WTC11 (cell line): ENCODE measurements at regions of chr17 and their contacts with region 1.

Region 1: GRCh38 chr17:31842183-31843069 is 16.6 kb downstream of the COPRS start:
- DNase-seq: peak; percentile 81
- ATAC-seq: peak; percentile 97
- H3K4me3 Mint-ChIP-seq: no peak overlapping the region
- H3K27ac Mint-ChIP-seq: no peak overlapping the region
- H3K4me1 Mint-ChIP-seq: no peaks in the 10 kb centered on the region
- H3K27me3 Mint-ChIP-seq: peaks cover 5% of the 10 kb centered on the region; the same call in 1 of the 2 replicates
- CTCF ChIP-seq: peak; percentile 79

Region 2: DNA sequence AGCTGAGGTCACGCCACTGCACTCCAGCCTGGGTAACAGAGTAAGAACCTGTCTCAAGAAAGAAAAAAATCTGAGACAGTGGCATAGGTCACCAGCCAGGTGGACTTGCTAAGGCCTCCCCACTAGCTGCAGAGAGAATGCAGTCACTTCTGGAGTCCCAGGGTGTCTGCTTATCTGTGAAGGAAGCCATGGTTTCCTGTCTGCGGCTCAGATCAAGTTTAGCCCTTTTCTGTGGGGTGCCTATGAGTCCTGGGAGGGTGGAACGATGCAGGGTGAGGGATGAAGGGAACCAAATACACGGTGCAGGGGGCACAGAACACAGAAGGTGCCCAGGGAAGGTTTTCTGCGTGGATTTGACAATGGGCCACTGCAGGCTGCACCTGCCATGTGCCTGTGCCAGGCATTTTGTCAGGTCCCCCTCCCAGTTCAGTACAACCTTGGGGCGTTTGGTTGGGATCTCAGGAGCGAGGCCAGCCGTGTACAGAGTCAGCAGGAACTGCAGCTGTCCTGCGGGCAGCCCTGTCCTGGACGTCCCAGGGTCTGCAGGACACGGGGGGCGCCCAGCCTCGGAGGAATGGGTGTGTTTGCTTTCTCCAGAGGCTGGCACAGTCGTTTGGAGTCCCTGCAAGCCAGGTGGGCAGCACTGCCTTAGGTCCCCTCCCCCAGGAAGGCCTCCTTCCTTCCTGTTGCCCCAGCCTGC is 409.2 kb before region 1 on chr17:
- CTCF ChIA-PET with region 1: interaction called, 10 read pairs
- POLR2A ChIA-PET with region 1: no interaction called
- DNase-seq: no peak
- ATAC-seq: no peak
- H3K4me3 Mint-ChIP-seq: no peak overlapping the region
- H3K27ac Mint-ChIP-seq: no peak overlapping the region
- H3K4me1 Mint-ChIP-seq: peaks cover 13% of the 10 kb centered on the region
- H3K27me3 Mint-ChIP-seq: no peaks in the 10 kb centered on the region; the same call in 1 of the 2 replicates
- CTCF ChIP-seq: no peak

Region 3: GRCh38 chr17:31533546-31534155 is 308.8 kb before region 1 on chr17:
- CTCF ChIA-PET with region 1: interaction called, 59 read pairs
- POLR2A ChIA-PET with region 1: interaction called, 3 read pairs
- DNase-seq: peak; percentile 72
- ATAC-seq: peak; percentile 74
- H3K4me3 Mint-ChIP-seq: no peak overlapping the region
- H3K27ac Mint-ChIP-seq: no peak overlapping the region
- H3K4me1 Mint-ChIP-seq: peaks cover 3% of the 10 kb centered on the region; the same call in 1 of the 2 replicates
- H3K27me3 Mint-ChIP-seq: no peaks in the 10 kb centered on the region
- CTCF ChIP-seq: 0 out of 2 replicates have a peak, but pooled peaks have one; percentile 36

Region 4: DNA sequence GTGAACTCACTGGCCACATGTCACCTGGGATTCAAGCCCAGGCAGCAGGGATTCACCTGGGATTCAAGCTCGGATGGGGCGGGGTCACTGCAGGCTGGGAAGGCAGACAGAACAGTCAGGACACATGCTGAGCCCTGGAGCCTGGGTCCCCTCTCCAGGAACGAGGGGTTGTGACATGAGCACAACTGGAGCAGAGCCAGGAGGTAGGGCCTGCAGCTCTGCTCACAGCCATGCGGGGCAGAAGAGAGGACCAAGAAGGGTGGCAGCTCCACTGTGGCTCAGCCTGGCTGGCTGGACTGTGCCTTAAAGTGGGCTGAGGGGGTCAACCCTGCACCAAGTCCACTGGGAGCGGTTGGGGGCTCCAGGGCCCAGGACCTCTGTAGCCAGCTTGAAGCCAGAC is 300.9 kb before region 1 on chr17:
- CTCF ChIA-PET with region 1: interaction called, 12 read pairs
- POLR2A ChIA-PET with region 1: no interaction called
- DNase-seq: peak; percentile 32
- ATAC-seq: peak; percentile 86
- H3K4me3 Mint-ChIP-seq: no peak overlapping the region
- H3K27ac Mint-ChIP-seq: no peak overlapping the region
- H3K4me1 Mint-ChIP-seq: no peaks in the 10 kb centered on the region
- H3K27me3 Mint-ChIP-seq: no peaks in the 10 kb centered on the region
- CTCF ChIP-seq: no peak

Region 5: DNA sequence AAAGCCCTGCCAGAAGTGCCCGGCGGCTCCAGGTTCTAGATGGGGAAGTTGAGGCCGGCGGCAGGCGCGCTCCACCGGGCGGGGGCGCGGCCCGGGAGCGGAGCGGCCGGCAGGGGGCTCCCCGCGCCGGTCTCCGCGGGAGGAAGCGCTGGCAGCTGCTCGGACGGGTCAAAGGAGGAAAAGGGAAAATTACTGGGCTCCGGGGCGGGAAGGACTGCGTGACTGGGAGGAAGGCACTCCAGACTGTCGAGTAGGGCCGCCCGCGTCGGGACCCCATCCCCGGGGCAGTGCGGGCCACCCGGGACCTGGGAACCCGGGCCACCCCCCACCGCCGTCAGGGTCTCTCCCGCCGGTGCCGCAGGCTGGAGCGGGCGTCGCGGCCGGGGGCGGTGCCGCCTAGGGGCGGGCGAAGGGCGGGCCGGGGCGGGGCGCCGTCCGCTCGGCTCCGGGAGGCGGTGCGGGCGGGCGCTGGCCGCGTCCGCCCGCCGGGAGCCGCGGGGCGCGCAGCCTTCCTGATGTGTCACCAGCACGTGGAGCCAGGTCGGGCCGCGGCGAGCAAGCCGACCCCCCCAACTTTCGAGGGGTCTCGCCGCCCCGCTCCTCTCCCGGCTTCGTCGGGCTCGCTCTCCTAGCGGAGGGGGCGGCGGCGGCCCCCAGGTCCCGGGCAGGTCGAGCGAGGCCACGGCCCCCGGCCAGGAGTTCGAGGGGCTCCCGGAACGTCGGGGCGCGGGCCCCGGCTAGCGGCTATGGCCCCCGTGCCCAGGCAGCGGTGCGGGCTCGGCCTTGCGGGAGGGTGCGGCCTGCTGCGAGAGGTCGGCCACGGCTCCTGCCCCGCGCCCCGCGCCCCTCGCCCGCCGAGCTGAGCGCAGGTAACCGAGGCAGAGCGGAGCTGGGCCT is 283.4 kb before region 1 on chr17:
- CTCF ChIA-PET with region 1: interaction called, 51 read pairs
- POLR2A ChIA-PET with region 1: no interaction called
- DNase-seq: peak; percentile 65
- ATAC-seq: peak; percentile 71
- H3K4me3 Mint-ChIP-seq: peak overlapping the region; percentile 71
- H3K27ac Mint-ChIP-seq: no peak overlapping the region
- H3K4me1 Mint-ChIP-seq: peaks cover 31% of the 10 kb centered on the region
- H3K27me3 Mint-ChIP-seq: peaks cover 40% of the 10 kb centered on the region
- CTCF ChIP-seq: peak; percentile 53

Region 6: DNA sequence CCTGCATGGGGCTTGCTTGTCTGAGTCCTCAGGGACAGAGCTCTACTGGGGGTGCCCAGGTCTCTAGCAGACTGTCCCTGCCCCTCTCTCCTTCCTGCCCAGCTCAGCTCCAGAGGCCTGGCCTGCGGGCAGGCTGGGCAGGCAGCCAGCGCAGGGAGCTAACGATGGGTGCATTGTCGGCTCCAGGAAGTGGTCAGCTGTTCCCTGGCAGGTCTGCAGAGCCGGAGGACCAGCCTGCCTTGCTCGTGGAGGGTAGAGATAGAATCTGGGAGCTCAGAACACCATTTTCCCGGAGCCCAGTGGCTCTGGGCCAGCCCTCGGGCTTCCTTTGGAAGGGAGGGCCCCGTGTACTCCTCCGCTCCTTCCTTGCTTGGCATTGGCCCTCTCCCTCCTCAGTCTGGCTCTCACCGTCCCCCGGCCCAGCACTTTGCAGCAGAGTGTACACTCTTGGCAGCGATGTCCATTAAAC is 261.4 kb before region 1 on chr17:
- CTCF ChIA-PET with region 1: interaction called, 10 read pairs
- POLR2A ChIA-PET with region 1: no interaction called
- DNase-seq: no peak
- ATAC-seq: no peak
- H3K4me3 Mint-ChIP-seq: no peak overlapping the region
- H3K27ac Mint-ChIP-seq: no peak overlapping the region; the same call in 1 of the 2 replicates
- H3K4me1 Mint-ChIP-seq: no peaks in the 10 kb centered on the region
- H3K27me3 Mint-ChIP-seq: no peaks in the 10 kb centered on the region
- CTCF ChIP-seq: no peak

Region 7: GRCh38 chr17:31787857-31788570 is 54.4 kb before region 1 on chr17:
- CTCF ChIA-PET with region 1: no interaction called
- POLR2A ChIA-PET with region 1: no interaction called
- DNase-seq: no peak
- ATAC-seq: no peak
- H3K4me3 Mint-ChIP-seq: no peak overlapping the region
- H3K27ac Mint-ChIP-seq: no peak overlapping the region
- H3K4me1 Mint-ChIP-seq: no peaks in the 10 kb centered on the region
- H3K27me3 Mint-ChIP-seq: peaks cover 3% of the 10 kb centered on the region
- CTCF ChIP-seq: no peak

Region 8: DNA sequence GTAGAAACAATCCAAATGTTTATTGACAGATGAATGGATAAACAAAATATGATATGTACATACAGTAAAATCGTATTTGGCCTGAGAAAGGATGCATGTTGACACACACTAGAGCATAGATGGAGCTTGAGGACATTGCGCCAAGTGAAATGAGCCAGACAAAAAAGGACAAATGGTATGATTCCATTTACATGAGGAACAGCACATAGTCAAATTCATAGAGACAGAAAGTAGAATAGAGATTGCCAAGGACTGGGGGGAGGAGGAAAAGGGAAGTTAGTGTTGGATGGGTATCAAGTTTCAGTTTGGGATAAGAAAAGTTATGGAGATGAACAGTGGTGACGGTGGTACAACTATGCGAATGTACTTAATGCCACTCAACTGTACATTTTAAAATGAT is 31.3 kb before region 1 on chr17:
- CTCF ChIA-PET with region 1: no interaction called
- POLR2A ChIA-PET with region 1: no interaction called
- DNase-seq: no peak
- ATAC-seq: no peak
- H3K4me3 Mint-ChIP-seq: no peak overlapping the region
- H3K27ac Mint-ChIP-seq: no peak overlapping the region
- H3K4me1 Mint-ChIP-seq: peaks cover 2% of the 10 kb centered on the region; the same call in 1 of the 2 replicates
- H3K27me3 Mint-ChIP-seq: no peaks in the 10 kb centered on the region; the same call in 1 of the 2 replicates
- CTCF ChIP-seq: no peak

Region 9: DNA sequence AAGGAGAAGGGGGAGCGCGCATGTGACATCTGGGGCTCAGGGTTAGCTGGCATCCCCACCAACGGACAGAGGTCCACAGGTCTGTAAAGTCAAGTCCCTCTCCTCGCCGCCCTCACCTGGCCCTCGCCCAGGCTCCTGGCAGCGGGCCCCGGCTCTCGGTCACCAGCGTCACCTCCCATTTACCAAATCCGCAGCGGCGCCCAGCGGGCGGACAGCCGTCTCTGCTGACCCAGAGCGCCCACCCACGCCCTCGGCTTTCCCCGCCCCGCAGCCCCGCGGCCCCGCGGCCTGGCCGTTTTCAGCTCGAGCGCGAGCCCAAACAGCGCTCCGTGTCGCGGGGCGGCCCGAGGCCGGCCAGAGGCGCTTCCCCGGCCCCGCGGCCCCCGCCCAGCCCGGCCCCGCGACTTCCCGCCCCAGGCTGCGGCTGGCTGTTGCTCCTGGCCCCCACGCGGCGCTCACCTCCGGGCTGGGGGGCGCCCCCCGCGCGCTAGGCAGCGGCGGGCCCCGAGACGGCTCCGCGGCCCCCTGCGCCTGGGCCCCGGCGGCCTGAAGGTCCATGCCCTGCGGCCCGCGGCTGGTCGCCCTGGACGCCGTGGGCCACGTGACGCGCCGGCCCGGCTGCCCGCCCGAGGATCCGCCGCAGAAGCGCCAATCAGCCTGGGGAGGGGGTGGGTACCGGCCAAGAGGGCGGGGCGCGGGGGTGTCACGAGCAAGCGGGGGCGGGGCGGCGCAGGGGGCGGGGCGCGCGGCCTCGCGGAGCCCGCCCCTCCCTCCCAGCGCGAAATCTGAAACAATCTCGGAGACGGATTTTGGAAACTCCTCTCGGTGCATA is 16.4 kb after region 1 on chr17 and contains the start of gene COPRS:
- CTCF ChIA-PET with region 1: interaction called, 11 read pairs
- POLR2A ChIA-PET with region 1: no interaction called
- DNase-seq: peak; percentile 81
- ATAC-seq: peak; percentile 86
- H3K4me3 Mint-ChIP-seq: peak within 1 kb of the TSS; percentile 70
- H3K27ac Mint-ChIP-seq: peak within 1 kb of the TSS; percentile 39
- H3K4me1 Mint-ChIP-seq: peaks cover 19% of the 10 kb centered on the region
- H3K27me3 Mint-ChIP-seq: peaks cover 6% of the 10 kb centered on the region; the same call in 1 of the 2 replicates
- CTCF ChIP-seq: no peak
- total RNA-seq, gene COPRS: 37.5 to 41.2 TPM (median 39.1 TPM) in 3 replicates

Region 10: GRCh38 chr17:31888124-31888523 is 45.7 kb after region 1 on chr17:
- CTCF ChIA-PET with region 1: no interaction called
- POLR2A ChIA-PET with region 1: no interaction called
- DNase-seq: no peak
- ATAC-seq: no peak
- H3K4me3 Mint-ChIP-seq: no peak overlapping the region
- H3K27ac Mint-ChIP-seq: no peak overlapping the region
- H3K4me1 Mint-ChIP-seq: no peaks in the 10 kb centered on the region
- H3K27me3 Mint-ChIP-seq: no peaks in the 10 kb centered on the region
- CTCF ChIP-seq: no peak